ENCODE measurements at regions of chr1 and their contacts with region 1.

Region 1: DNA sequence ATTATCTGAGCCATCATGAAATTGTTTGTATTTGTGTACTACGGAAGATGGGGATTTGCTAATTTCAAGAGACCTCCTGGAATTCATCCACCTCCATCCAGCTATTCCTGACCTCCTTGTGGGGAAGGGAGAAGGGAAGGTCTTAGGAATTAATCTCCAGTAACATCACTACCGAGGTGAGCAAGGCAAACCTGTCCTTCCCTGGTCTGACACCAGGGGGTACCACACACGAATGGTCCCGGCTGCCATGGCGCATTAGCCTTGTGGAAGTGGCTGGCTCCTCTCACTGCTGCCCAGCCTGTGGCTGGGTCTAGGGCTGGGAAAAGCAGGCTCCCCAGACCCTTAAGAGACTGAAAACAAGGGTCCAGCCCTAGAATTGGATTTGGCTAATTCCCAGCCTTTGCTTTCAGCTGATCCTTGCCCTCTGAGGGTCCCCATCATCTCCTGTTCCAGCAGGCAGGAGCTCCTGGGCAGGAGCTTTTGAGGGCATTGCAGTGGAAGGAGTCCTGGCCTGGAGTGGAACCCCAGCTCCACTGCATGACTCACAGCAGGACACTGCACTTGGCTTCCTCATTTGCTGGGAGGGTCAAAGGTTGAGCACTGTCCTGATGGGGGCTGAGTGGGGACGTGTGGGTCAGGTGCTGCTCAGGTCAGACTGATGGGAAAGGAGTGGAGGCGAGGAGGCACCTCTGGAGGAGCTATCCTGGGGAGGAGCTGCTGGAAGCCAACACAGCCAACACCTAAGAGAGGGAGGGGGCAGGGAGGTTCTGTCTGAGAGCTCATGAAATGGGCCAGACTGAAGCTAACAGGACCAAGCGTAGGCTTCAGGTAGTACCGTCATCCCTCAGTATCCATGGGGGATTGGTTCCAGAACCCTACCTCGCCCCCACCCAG is 34.7 kb downstream of the RIMS3 start:
- DNase-seq: peak; percentile 67
- H3K4me3 ChIP-seq: no peak overlapping the region
- H3K27ac ChIP-seq: no peak overlapping the region
- H3K4me1 ChIP-seq: no peaks in the 10 kb centered on the region
- CTCF ChIP-seq: peak; percentile 77

Region 2: DNA sequence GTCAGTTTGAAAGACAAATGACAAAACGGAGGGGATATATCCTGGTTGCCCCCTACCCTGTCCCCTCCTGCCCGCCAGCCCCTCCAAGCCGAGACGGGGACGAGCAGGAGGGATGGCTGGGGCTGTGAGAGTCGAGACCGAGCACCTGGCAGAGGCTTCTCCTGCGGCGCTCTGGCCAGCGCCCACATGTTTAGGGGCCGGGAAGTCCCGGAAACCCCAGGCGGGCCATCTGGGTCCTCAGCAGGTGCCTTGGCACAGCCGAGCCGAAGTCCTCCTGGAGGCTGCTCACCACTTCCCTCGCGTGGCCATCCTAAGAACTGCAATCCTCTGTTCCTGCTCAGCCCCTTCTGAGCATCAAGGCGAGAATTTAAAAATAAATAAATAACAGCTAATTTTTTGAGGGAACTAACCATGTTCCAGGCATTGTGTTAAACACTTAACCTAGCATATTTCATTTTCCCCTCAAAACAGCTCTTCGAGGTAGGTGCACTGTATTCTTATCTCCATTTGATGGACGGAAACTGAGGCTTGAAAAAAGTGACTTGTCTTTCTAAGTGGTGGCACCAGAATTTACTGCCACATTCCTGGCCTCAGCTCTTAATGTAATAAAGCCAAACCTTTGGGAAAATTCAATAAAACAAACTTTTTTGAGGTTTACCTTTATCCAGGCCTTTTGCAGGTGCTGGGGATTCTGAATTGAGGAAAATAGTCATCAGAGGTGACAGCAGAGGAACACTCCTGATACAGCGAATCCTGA is 38.2 kb after region 1 on chr1:
- CTCF ChIA-PET with region 1: interaction called, 3 read pairs
- POLR2A ChIA-PET with region 1: no interaction called
- intact Hi-C with region 1: loop called (anchors 1 kb)
- DNase-seq: peak; percentile 91
- H3K4me3 ChIP-seq: peak overlapping the region; percentile 62
- H3K27ac ChIP-seq: peak overlapping the region; percentile 23
- H3K4me1 ChIP-seq: peaks cover 27% of the 10 kb centered on the region
- CTCF ChIP-seq: peak; percentile 94